ENCODE measurements at regions of chr13 and their contacts with region 1.

Region 1: GRCh38 chr13:98598043-98598442 is 21.1 kb upstream of the STK24 start:
- DNase-seq: no peak
- H3K4me3 ChIP-seq: no peak overlapping the region
- CTCF ChIP-seq: no peak

Region 2: GRCh38 chr13:98581971-98582680 is 15.9 kb before region 1 on chr13:
- CTCF ChIA-PET with region 1: interaction called, 12 read pairs
- POLR2A ChIA-PET with region 1: no interaction called
- DNase-seq: no peak
- H3K4me3 ChIP-seq: no peak overlapping the region
- CTCF ChIP-seq: no peak

Region 3: DNA sequence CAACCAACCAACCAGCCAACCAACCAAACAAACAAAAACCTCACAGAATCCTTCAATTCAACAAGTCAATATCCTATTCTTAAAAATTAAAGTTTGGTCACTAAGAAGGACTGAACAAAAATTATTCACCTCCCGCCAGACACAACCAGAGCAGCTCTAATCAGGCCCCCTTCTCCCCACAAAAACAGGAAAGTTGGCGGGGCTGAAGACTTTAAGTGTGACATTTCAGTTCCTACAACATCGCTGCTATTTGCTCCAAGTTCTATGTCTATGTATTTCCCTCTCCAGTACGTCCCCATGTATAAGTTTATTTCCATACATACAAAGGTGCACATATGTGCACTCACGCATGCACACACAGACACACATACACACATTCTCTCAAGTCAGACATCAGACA is 11.7 kb after region 1 on chr13:
- CTCF ChIA-PET with region 1: no interaction called
- POLR2A ChIA-PET with region 1: no interaction called
- DNase-seq: no peak
- H3K4me3 ChIP-seq: no peak overlapping the region
- CTCF ChIP-seq: no peak

Measured in AG04449 (cell line).